GM12878 (cell line): ENCODE measurements at regions of chr16 and their contacts with region 1.

Region 1: GRCh38 chr16:48459167-48459566 is 74.0 kb upstream of the SIAH1 start:
- DNase-seq: peak; percentile 27
- ATAC-seq: peak; percentile 75
- H3K4me3 ChIP-seq: no peak overlapping the region
- H3K27ac ChIP-seq: peak overlapping the region; percentile 57
- H3K4me1 ChIP-seq: peaks cover 23% of the 10 kb centered on the region
- H3K27me3 ChIP-seq: no peaks in the 10 kb centered on the region
- CTCF ChIP-seq: no peak
- EP300 ChIP-seq: no peak; a peak in 1 of 4 replicates
- POLR2A ChIP-seq: no peak
- RAD21 ChIP-seq: no peak

Region 2: DNA sequence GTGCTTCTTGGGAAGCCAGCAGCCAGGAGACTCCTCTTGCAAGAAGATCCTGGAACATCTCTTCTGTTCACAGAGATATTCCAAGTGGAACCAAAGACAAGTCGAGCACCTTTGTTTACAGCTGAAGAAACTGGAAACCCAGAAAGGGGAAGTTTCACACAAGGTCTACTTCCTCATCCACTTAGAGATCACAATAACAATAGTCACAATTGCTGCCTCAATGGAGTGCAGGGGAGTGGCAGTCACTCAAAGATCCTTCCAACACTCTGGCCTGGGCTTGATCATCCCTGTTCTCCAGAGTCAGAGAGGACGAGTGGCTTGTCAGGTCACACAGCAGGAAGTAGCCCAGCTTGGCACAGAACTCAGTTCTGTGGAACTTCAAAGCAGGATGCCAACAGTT is 27.0 kb before region 1 on chr16:
- CTCF ChIA-PET with region 1: interaction called, 3 read pairs
- POLR2A ChIA-PET with region 1: interaction called, 6 read pairs
- RAD21 ChIA-PET with region 1: interaction called, 7 read pairs
- SMC1A ChIA-PET with region 1: interaction called, 18 read pairs
- in situ Hi-C with region 1: no loop called
- intact Hi-C with region 1: no loop called
- DNase-seq: peak; percentile 48
- ATAC-seq: peak; percentile 92
- H3K4me3 ChIP-seq: peak overlapping the region; percentile 8; the same call in 1 of the 2 replicates
- H3K27ac ChIP-seq: peak overlapping the region; percentile 67
- H3K4me1 ChIP-seq: peaks cover 21% of the 10 kb centered on the region
- H3K27me3 ChIP-seq: no peaks in the 10 kb centered on the region
- CTCF ChIP-seq: no peak
- EP300 ChIP-seq: no peak
- POLR2A ChIP-seq: 0 out of 2 replicates have a peak, but pooled peaks have one; percentile 24
- RAD21 ChIP-seq: 0 out of 2 replicates have a peak, but pooled peaks have one; percentile 1

Region 3: DNA sequence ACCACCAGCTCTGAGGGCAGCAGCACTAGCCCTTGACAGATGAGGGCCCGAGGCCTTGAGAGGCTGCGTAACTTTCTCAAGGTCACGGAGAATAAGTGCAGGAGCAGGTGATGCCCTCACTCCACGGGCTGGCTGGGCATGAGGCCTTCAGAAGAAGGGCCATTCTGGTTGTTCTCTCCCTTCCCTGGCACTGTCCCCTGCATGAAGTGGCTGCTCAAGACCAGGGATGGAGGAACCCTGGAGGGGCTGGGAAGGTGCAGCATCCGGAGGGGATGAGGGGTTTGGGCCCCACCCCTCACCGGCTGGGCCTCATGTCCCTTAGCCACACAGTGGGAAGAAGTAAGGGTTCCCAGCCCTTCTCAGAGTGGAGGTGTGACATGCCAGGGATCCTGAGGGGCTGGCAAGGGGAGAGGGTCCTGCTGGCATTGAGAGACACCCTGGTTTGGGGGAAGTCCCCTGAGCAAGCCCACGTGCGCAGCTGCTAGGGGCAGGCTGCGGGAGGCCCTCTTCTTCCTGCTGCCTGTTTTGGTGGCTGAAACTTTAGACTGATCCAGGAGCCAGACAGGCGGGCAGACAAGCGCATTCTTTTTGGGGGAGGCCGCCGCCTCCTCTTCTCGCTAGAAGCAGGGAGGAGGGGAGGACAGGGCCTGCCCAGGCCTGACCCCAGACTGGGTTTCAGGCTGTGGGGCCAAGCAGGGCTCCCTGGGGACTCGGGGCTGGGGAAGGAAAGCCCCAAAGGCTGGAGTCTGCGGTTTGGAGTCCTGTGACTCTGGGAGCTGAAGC is 76.9 kb after region 1 on chr16:
- CTCF ChIA-PET with region 1: no interaction called
- POLR2A ChIA-PET with region 1: no interaction called
- RAD21 ChIA-PET with region 1: interaction called, 3 read pairs
- SMC1A ChIA-PET with region 1: interaction called, 5 read pairs
- in situ Hi-C with region 1: no loop called
- intact Hi-C with region 1: loop called (anchors 2 kb)
- DNase-seq: peak; percentile 72
- ATAC-seq: peak; percentile 85
- H3K4me3 ChIP-seq: no peak overlapping the region
- H3K27ac ChIP-seq: peak overlapping the region; percentile 73
- H3K4me1 ChIP-seq: peaks cover 24% of the 10 kb centered on the region
- H3K27me3 ChIP-seq: no peaks in the 10 kb centered on the region
- CTCF ChIP-seq: no peak
- EP300 ChIP-seq: peak; percentile 71 to 76; a peak in 3 of 4 replicates
- POLR2A ChIP-seq: no peak; the same call in 1 of the 2 replicates
- RAD21 ChIP-seq: 0 out of 2 replicates have a peak, but pooled peaks have one; percentile 7